ENCODE measurements at regions of chr12 and their contacts with region 1.

Region 1: DNA sequence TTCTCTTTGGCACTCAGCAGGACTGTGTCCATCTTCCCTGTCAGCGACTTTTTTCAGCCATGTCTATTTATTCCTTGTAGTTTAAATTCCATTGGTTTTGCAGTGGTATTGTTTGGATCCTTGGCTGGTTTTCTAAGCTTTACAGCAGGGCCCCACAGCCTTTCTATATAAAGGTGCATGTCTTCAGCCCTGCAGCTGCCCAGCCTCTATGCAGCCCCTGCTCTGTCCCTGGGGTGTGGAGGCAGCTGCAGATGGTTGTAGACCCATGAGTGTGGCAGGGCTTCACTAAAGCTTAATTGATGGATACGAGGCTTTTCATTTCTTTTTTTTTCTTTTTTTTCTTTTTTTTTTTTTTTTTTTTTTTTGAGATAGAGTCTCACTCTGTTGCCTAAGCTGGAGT is 29.7 kb downstream of the SFSWAP start:
- DNase-seq: peak in 1 of 7 donors; percentile 10
- H3K4me3 ChIP-seq: no peak overlapping the region
- H3K27ac ChIP-seq: no peak overlapping the region
- H3K4me1 ChIP-seq: no peaks in the 10 kb centered on the region
- H3K27me3 ChIP-seq: no peaks in the 10 kb centered on the region
- CTCF ChIP-seq: no peak
- POLR2A ChIP-seq: no peak

Region 2: DNA sequence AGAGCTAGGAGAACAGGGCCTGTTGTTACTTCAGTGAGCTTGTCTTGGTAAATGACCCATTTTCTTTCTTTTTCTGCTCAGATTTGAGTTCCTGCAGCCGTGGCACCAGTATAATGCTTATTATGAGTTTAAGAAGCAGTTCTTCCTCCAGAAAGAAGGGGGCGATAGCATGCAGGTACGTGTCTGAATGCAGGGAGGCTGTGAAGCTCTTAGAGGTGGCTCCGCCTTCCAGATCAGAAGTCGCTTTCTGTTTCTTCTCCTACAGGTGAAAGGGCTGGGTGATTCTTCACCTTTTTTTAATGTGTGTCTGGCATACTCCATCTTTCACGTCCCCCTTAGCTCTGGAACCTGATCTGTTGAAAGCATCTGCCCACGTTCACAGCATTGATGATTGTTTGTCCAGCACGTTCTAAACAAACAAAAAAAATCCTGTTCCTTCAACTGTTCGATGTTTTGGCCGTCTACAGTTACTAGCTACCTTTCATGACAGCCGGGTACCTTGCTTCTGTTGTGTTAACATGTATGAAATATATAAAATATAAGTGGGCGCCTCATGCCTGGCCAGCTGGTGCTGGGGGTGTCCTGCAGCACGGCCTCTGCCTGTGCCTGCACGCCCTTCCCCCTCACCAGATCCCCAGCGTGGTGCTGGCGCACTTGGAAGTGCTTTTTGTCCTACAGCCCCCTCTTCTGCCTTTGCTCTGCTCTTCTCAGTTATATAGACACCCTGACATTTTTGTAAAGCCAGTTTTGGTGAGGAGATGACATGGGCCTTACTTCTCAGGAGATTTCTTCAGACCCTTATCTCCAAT is 14.9 kb after region 1 on chr12:
- intact Hi-C with region 1: loop called in 1 of 2 experiments (anchors 2 kb)
- DNase-seq: no peak
- H3K4me3 ChIP-seq: no peak overlapping the region
- H3K27ac ChIP-seq: no peak overlapping the region
- H3K4me1 ChIP-seq: no peaks in the 10 kb centered on the region
- H3K27me3 ChIP-seq: no peaks in the 10 kb centered on the region
- CTCF ChIP-seq: peak in 1 of 6 experiments; percentile 13
- POLR2A ChIP-seq: no peak

Measured in adrenal gland (tissue), 19 donors.